Caco-2 (cell line): ENCODE measurements at regions of chr17 and their contacts with region 1.

Region 1: GRCh38 chr17:28041068-28041843 is 1.2 kb upstream of the NLK start:
- DNase-seq: peak; percentile 100
- H3K4me3 ChIP-seq: peak overlapping the region; percentile 87
- H3K4me3 Mint-ChIP-seq: peak overlapping the region; percentile 99
- H3K27ac Mint-ChIP-seq: peak overlapping the region; percentile 93
- H3K4me1 ChIP-seq: peaks cover 40% of the 10 kb centered on the region
- H3K4me1 Mint-ChIP-seq: peaks cover 24% of the 10 kb centered on the region
- H3K27me3 ChIP-seq: no peaks in the 10 kb centered on the region
- H3K27me3 Mint-ChIP-seq: no peaks in the 10 kb centered on the region
- CTCF ChIP-seq: no peak

Region 2: GRCh38 chr17:27601069-27601975 is 439.9 kb before region 1 on chr17:
- CTCF ChIA-PET with region 1: no interaction called
- POLR2A ChIA-PET with region 1: no interaction called
- intact Hi-C with region 1: no loop called
- DNase-seq: peak; percentile 90 to 94
- H3K4me3 ChIP-seq: no peak overlapping the region
- H3K4me3 Mint-ChIP-seq: no peak overlapping the region
- H3K27ac Mint-ChIP-seq: peak overlapping the region; percentile 11
- H3K4me1 ChIP-seq: no peaks in the 10 kb centered on the region
- H3K4me1 Mint-ChIP-seq: peaks cover 6% of the 10 kb centered on the region
- H3K27me3 ChIP-seq: no peaks in the 10 kb centered on the region
- H3K27me3 Mint-ChIP-seq: no peaks in the 10 kb centered on the region
- CTCF ChIP-seq: peak; percentile 99 to 100

Region 3: GRCh38 chr17:27879987-27880608 is 161.2 kb before region 1 on chr17:
- CTCF ChIA-PET with region 1: interaction called, 13 read pairs
- POLR2A ChIA-PET with region 1: interaction called, 3 read pairs
- intact Hi-C with region 1: loop called (anchors 5 kb)
- DNase-seq: peak; percentile 89 to 95
- H3K4me3 ChIP-seq: no peak overlapping the region
- H3K4me3 Mint-ChIP-seq: no peak overlapping the region
- H3K27ac Mint-ChIP-seq: peak overlapping the region; percentile 10
- H3K4me1 ChIP-seq: no peaks in the 10 kb centered on the region
- H3K4me1 Mint-ChIP-seq: peaks cover 10% of the 10 kb centered on the region
- H3K27me3 ChIP-seq: no peaks in the 10 kb centered on the region
- H3K27me3 Mint-ChIP-seq: no peaks in the 10 kb centered on the region
- CTCF ChIP-seq: peak; percentile 99 to 100

Region 4: DNA sequence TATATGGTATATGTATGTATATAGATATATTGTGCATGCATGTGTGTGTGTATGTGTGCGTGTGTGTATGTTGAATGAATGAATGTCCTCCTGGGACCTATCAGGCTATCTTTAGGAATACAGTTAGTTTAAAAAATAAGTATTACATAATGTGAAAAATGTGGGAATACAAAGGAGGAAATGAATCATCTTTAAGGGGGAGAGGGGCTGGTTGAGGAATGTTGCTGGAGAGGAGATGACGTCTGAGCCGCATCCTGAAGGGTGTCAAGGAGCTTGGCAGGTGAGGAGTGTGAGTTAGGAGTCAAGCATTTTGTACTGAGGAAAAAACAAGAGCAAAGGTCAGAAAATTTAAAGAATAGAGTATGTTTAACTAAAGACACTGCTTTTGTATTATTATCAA is 61.2 kb before region 1 on chr17:
- CTCF ChIA-PET with region 1: interaction called, 6 read pairs
- POLR2A ChIA-PET with region 1: interaction called, 12 read pairs
- intact Hi-C with region 1: loop called (anchors 1 kb)
- DNase-seq: peak in 1 of 2 experiments; percentile 77
- H3K4me3 ChIP-seq: no peak overlapping the region
- H3K4me3 Mint-ChIP-seq: peak overlapping the region; percentile 0
- H3K27ac Mint-ChIP-seq: peak overlapping the region; percentile 27
- H3K4me1 ChIP-seq: peaks cover 59% of the 10 kb centered on the region
- H3K4me1 Mint-ChIP-seq: peaks cover 59% of the 10 kb centered on the region
- H3K27me3 ChIP-seq: no peaks in the 10 kb centered on the region
- H3K27me3 Mint-ChIP-seq: no peaks in the 10 kb centered on the region
- CTCF ChIP-seq: no peak

Region 5: GRCh38 chr17:28001149-28001548 is 40.1 kb before region 1 on chr17:
- CTCF ChIA-PET with region 1: no interaction called
- POLR2A ChIA-PET with region 1: no interaction called
- intact Hi-C with region 1: no loop called
- DNase-seq: no peak
- H3K4me3 ChIP-seq: no peak overlapping the region
- H3K4me3 Mint-ChIP-seq: no peak overlapping the region
- H3K27ac Mint-ChIP-seq: no peak overlapping the region
- H3K4me1 ChIP-seq: peaks cover 11% of the 10 kb centered on the region
- H3K4me1 Mint-ChIP-seq: peaks cover 1% of the 10 kb centered on the region
- H3K27me3 ChIP-seq: no peaks in the 10 kb centered on the region
- H3K27me3 Mint-ChIP-seq: no peaks in the 10 kb centered on the region
- CTCF ChIP-seq: no peak

Region 6: DNA sequence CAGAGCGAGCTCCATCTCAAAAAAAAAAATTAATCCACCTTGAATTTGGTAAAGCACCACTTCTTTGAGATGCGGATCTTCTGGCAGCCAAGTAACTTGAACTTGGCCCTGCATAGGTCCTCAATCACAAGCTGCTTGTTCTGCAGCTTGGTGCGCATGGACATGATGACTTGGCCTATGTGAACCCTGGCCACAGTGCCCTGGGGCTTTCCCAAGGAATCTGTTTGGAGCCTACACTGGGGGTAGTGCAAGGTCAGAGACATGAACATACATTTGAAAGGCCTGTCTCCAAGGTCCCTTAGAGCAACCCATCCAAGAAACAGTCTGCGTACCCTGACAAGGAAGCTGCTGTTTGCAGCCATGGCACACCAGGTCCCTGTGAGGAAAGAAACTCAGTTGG is 19.2 kb before region 1 on chr17:
- CTCF ChIA-PET with region 1: interaction called, 3 read pairs
- POLR2A ChIA-PET with region 1: interaction called, 8 read pairs
- intact Hi-C with region 1: loop called (anchors 1 kb)
- DNase-seq: no peak
- H3K4me3 ChIP-seq: no peak overlapping the region
- H3K4me3 Mint-ChIP-seq: no peak overlapping the region
- H3K27ac Mint-ChIP-seq: no peak overlapping the region
- H3K4me1 ChIP-seq: no peaks in the 10 kb centered on the region
- H3K4me1 Mint-ChIP-seq: peaks cover 6% of the 10 kb centered on the region
- H3K27me3 ChIP-seq: no peaks in the 10 kb centered on the region
- H3K27me3 Mint-ChIP-seq: no peaks in the 10 kb centered on the region
- CTCF ChIP-seq: no peak

Region 7: GRCh38 chr17:28081467-28081866 is 40.2 kb after region 1 on chr17:
- CTCF ChIA-PET with region 1: no interaction called
- POLR2A ChIA-PET with region 1: interaction called, 13 read pairs
- intact Hi-C with region 1: no loop called
- DNase-seq: peak in 1 of 2 experiments; percentile 63
- H3K4me3 ChIP-seq: no peak overlapping the region
- H3K4me3 Mint-ChIP-seq: peak overlapping the region; percentile 24
- H3K27ac Mint-ChIP-seq: peak overlapping the region; percentile 33
- H3K4me1 ChIP-seq: peaks cover 40% of the 10 kb centered on the region
- H3K4me1 Mint-ChIP-seq: peaks cover 30% of the 10 kb centered on the region
- H3K27me3 ChIP-seq: no peaks in the 10 kb centered on the region
- H3K27me3 Mint-ChIP-seq: no peaks in the 10 kb centered on the region
- CTCF ChIP-seq: no peak

Region 8: GRCh38 chr17:28166478-28166877 is 125.2 kb after region 1 on chr17:
- CTCF ChIA-PET with region 1: no interaction called
- POLR2A ChIA-PET with region 1: no interaction called
- intact Hi-C with region 1: no loop called
- DNase-seq: no peak
- H3K4me3 ChIP-seq: no peak overlapping the region
- H3K4me3 Mint-ChIP-seq: no peak overlapping the region
- H3K27ac Mint-ChIP-seq: no peak overlapping the region
- H3K4me1 ChIP-seq: peaks cover 3% of the 10 kb centered on the region; the same call in 1 of the 2 replicates
- H3K4me1 Mint-ChIP-seq: peaks cover 5% of the 10 kb centered on the region
- H3K27me3 ChIP-seq: no peaks in the 10 kb centered on the region
- H3K27me3 Mint-ChIP-seq: no peaks in the 10 kb centered on the region
- CTCF ChIP-seq: no peak

Region 9: GRCh38 chr17:28227316-28228125 is 186.3 kb after region 1 on chr17:
- CTCF ChIA-PET with region 1: no interaction called
- POLR2A ChIA-PET with region 1: interaction called, 4 read pairs
- intact Hi-C with region 1: loop called (anchors 1 kb)
- DNase-seq: peak; percentile 100
- H3K4me3 ChIP-seq: peak overlapping the region; percentile 88
- H3K4me3 Mint-ChIP-seq: peak overlapping the region; percentile 91
- H3K27ac Mint-ChIP-seq: peak overlapping the region; percentile 95
- H3K4me1 ChIP-seq: peaks cover 32% of the 10 kb centered on the region
- H3K4me1 Mint-ChIP-seq: peaks cover 24% of the 10 kb centered on the region
- H3K27me3 ChIP-seq: no peaks in the 10 kb centered on the region
- H3K27me3 Mint-ChIP-seq: no peaks in the 10 kb centered on the region
- CTCF ChIP-seq: peak; percentile 16 to 45